Activated B cell treated with CpG ODN at 0.5 μM for 24 hours (primary cell): ENCODE measurements at regions of chr14 and their contacts with region 1.

Region 1: GRCh38 chr14:73785873-73786695 is 65.5 kb upstream of the PTGR2 start:
- DNase-seq: peak; percentile 51
- ATAC-seq: peak; percentile 42
- H3K4me3 Mint-ChIP-seq: peak overlapping the region; percentile 93
- H3K27ac Mint-ChIP-seq: peak overlapping the region; percentile 89
- H3K4me1 Mint-ChIP-seq: peaks cover 59% of the 10 kb centered on the region
- H3K27me3 Mint-ChIP-seq: no peaks in the 10 kb centered on the region
- CTCF ChIP-seq: no peak

Region 2: GRCh38 chr14:73771848-73772638 is 14.0 kb before region 1 on chr14:
- CTCF ChIA-PET with region 1: interaction called, 15 read pairs
- POLR2A ChIA-PET with region 1: interaction called, 123 read pairs
- intact Hi-C with region 1: loop called (anchors 1 kb)
- DNase-seq: peak; percentile 60
- ATAC-seq: peak; percentile 56
- H3K4me3 Mint-ChIP-seq: peak overlapping the region; percentile 74
- H3K27ac Mint-ChIP-seq: peak overlapping the region; percentile 95
- H3K4me1 Mint-ChIP-seq: peaks cover 88% of the 10 kb centered on the region
- H3K27me3 Mint-ChIP-seq: no peaks in the 10 kb centered on the region
- CTCF ChIP-seq: no peak

Region 3: GRCh38 chr14:73825551-73826188 is 39.6 kb after region 1 on chr14:
- CTCF ChIA-PET with region 1: interaction called, 10 read pairs
- POLR2A ChIA-PET with region 1: no interaction called
- intact Hi-C with region 1: loop called (anchors 1 kb)
- DNase-seq: peak; percentile 61
- ATAC-seq: peak; percentile 99
- H3K4me3 Mint-ChIP-seq: no peak overlapping the region
- H3K27ac Mint-ChIP-seq: no peak overlapping the region
- H3K4me1 Mint-ChIP-seq: peaks cover 6% of the 10 kb centered on the region
- H3K27me3 Mint-ChIP-seq: no peaks in the 10 kb centered on the region
- CTCF ChIP-seq: peak; percentile 96

Region 4: DNA sequence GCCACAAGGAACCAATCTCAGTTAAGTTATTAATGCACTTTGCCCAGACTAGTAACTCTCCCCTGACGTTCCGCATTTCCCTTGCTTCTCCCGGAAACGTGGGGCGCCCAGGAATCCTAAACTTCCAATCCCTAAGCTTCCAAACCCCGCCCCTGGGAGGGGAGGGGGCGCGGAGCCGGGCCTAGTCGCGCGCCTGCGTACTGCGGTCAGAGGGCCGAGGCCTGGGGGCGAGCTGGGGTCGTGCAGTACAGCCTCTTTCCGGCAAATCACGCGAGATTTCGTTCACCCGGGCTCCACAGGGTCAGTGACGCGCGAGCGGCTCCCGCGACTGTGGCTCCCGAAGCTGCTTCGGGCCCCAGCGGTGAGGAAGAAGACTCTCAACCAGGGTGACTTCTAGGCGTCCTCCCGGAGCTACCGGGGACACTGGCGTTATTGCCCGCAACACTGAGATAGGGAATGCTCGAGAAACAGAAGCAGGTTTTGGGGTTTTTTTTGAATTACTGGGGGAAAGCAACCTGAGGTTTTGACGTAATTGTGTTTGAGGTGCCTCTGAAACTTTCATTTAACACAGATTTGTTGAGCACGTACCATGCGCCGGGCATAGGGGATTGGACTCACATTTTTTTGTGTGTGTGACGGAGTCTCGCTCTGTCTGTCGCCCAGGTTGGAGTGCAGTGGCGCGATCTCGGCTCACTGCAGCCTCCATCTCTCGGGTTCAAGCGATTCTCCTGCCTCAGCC is 65.7 kb after region 1 on chr14 and contains the start of gene PTGR2:
- CTCF ChIA-PET with region 1: no interaction called
- POLR2A ChIA-PET with region 1: interaction called, 5 read pairs
- intact Hi-C with region 1: loop called (anchors 2 kb)
- DNase-seq: peak; percentile 81
- ATAC-seq: peak; percentile 96
- H3K4me3 Mint-ChIP-seq: peak within 1 kb of the TSS; percentile 93
- H3K27ac Mint-ChIP-seq: peak within 1 kb of the TSS; percentile 96
- H3K4me1 Mint-ChIP-seq: peaks cover 21% of the 10 kb centered on the region
- H3K27me3 Mint-ChIP-seq: no peaks in the 10 kb centered on the region
- CTCF ChIP-seq: no peak
- total RNA-seq, gene PTGR2: 4.6 and 4.8 TPM in 2 replicates